ENCODE measurements at regions of chr1 and their contacts with region 1.

Region 1: DNA sequence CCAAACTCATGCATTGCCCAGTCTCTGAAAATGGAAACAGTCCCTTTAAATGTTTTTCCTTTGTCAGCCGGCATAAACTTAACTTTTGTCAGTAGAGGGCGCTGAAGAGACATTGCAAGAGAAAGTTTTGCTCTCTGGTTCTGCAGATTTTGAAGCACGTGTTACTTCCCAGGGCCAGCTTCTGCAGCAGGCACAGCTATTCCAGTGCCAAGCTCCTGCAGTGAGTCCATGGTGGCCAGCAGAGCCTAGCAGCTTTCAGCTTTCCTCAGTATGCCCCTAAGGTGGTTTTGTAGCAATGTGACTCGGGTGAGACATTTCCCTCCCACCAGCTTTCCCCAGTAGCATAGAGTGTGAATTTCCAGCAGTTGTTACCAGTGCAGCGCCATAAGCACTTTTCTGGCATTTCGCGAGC is 2.6 kb upstream of the IFI44L start:
- DNase-seq: peak; percentile 66
- ATAC-seq: peak; percentile 86 to 90

Region 2: GRCh38 chr1:78676347-78676982 is 58.8 kb after region 1 on chr1:
- intact Hi-C with region 1: loop called (anchors 2 to 5 kb)
- DNase-seq: no peak
- ATAC-seq: peak in 1 of 2 donors; percentile 39